ENCODE measurements at regions of chr5 and their contacts with region 1.

Region 1: GRCh38 chr5:131328536-131329285 is 64.9 kb downstream of the CDC42SE2 start:
- DNase-seq: no peak
- ATAC-seq: no peak
- H3K4me3 ChIP-seq: no peak overlapping the region
- H3K4me3 Mint-ChIP-seq: no peak overlapping the region
- H3K27ac ChIP-seq: peak overlapping the region in 1 of 2 donors; percentile 63
- H3K27ac Mint-ChIP-seq: peak overlapping the region; percentile 63
- H3K4me1 ChIP-seq: peaks cover 7 to 27% of the 10 kb centered on the region in 2 donors
- H3K4me1 Mint-ChIP-seq: peaks cover 58% of the 10 kb centered on the region
- H3K27me3 ChIP-seq: no peaks in the 10 kb centered on the region
- H3K27me3 Mint-ChIP-seq: no peaks in the 10 kb centered on the region
- CTCF ChIP-seq: no peak

Region 2: DNA sequence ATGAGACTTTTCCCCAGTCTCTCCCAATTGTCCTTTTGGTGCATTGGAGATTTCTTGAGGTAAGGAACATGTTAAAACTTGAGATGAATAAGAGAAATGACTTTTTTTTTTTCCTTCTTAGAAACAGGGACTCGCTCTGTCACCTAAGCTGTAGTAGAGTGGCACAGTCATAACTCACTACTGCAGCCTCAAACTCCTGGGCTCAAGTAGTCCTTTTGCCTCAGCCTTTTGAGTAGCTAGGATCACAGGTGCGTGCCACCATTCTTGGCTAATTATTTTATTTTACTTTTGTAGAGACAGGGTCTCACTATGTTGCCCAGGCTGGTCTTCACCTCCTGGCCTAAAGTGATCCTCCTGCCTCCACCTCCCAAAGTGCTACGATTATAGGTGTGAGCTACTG is 39.0 kb before region 1 on chr5:
- CTCF ChIA-PET with region 1: no interaction called
- POLR2A ChIA-PET with region 1: no interaction called
- intact Hi-C with region 1: loop called (anchors 5 kb)
- DNase-seq: no peak
- ATAC-seq: no peak
- H3K4me3 ChIP-seq: no peak overlapping the region
- H3K4me3 Mint-ChIP-seq: peak overlapping the region; percentile 77
- H3K27ac ChIP-seq: peak overlapping the region; percentile 45 to 83
- H3K27ac Mint-ChIP-seq: peak overlapping the region; percentile 73
- H3K4me1 ChIP-seq: peaks cover 37 to 41% of the 10 kb centered on the region in 2 donors
- H3K4me1 Mint-ChIP-seq: peaks cover 55% of the 10 kb centered on the region
- H3K27me3 ChIP-seq: no peaks in the 10 kb centered on the region
- H3K27me3 Mint-ChIP-seq: no peaks in the 10 kb centered on the region
- CTCF ChIP-seq: no peak

Region 3: GRCh38 chr5:131375351-131375750 is 46.6 kb after region 1 on chr5:
- CTCF ChIA-PET with region 1: no interaction called
- POLR2A ChIA-PET with region 1: interaction called, 4 read pairs
- intact Hi-C with region 1: loop called (anchors 5 kb)
- DNase-seq: peak; percentile 50
- ATAC-seq: no peak
- H3K4me3 ChIP-seq: peak overlapping the region in 2 of 5 experiments; percentile 5 to 37
- H3K4me3 Mint-ChIP-seq: peak overlapping the region; percentile 63
- H3K27ac ChIP-seq: peak overlapping the region; percentile 71 to 99
- H3K27ac Mint-ChIP-seq: peak overlapping the region; percentile 81
- H3K4me1 ChIP-seq: peaks cover 75 to 94% of the 10 kb centered on the region in 2 donors
- H3K4me1 Mint-ChIP-seq: peaks cover 84% of the 10 kb centered on the region
- H3K27me3 ChIP-seq: no peaks in the 10 kb centered on the region
- H3K27me3 Mint-ChIP-seq: no peaks in the 10 kb centered on the region
- CTCF ChIP-seq: no peak

Measured in B cell (primary cell).